CD8-positive, alpha-beta T cell (primary cell): ENCODE measurements at regions of chr10 and their contacts with region 1.

Region 1: DNA sequence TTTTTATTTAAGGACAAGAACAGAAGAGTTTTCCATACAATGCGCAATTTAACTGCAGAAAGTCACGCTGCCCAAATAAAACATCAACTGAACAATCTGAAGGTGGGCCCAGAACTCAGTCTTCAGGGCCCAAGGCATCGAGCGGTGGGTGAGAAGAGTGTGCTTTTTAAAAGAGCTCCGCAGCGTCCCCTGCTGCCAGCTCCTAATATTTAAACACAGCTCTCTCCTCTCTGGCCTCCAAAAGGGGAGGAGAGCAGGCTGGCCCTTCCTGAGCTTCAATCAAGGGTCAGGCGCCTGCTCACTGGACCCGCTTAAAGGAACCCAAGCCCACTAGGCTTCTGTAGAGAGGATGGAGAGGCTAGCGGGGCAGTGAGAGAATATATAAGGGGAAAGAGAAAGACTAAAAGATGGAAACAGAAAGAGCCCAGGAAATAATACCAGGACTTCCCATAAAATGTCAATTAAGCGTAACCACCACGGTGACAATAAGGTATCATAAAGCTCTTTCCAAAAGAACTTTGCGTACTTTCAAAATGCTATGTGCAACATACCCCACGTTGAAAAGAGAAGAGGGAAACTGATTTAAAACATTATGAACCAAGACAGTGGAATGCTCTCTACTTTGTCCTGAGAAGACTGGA is 2.8 kb downstream of the FAM53B start:
- DNase-seq: peak; percentile 64 to 88 (median 80)
- ATAC-seq: peak; percentile 55
- H3K4me3 ChIP-seq: peak overlapping the region; percentile 10 to 75
- H3K4me3 Mint-ChIP-seq: peak overlapping the region; percentile 97
- H3K27ac ChIP-seq: peak overlapping the region in 1 of 2 experiments; percentile 73
- H3K27ac Mint-ChIP-seq: peak overlapping the region; percentile 93
- H3K4me1 ChIP-seq: peaks cover 67% of the 10 kb centered on the region
- H3K4me1 Mint-ChIP-seq: peaks cover 75% of the 10 kb centered on the region
- H3K27me3 ChIP-seq: no peaks in the 10 kb centered on the region
- H3K27me3 Mint-ChIP-seq: no peaks in the 10 kb centered on the region
- CTCF ChIP-seq: peak; percentile 94

Region 2: GRCh38 chr10:123994417-123995081 is 746.9 kb before region 1 on chr10:
- CTCF ChIA-PET with region 1: interaction called, 6 read pairs
- POLR2A ChIA-PET with region 1: no interaction called
- intact Hi-C with region 1: loop called in 1 of 2 experiments (anchors 2 kb)
- DNase-seq: peak; percentile 56 to 91 (median 77)
- ATAC-seq: peak; percentile 90
- H3K4me3 ChIP-seq: peak overlapping the region; percentile 10 to 39
- H3K4me3 Mint-ChIP-seq: peak overlapping the region; percentile 29
- H3K27ac ChIP-seq: no peak overlapping the region
- H3K27ac Mint-ChIP-seq: no peak overlapping the region
- H3K4me1 ChIP-seq: peaks cover 10% of the 10 kb centered on the region
- H3K4me1 Mint-ChIP-seq: peaks cover 25% of the 10 kb centered on the region
- H3K27me3 ChIP-seq: peaks cover 12 to 18% of the 10 kb centered on the region in 2 experiments
- H3K27me3 Mint-ChIP-seq: peaks cover 48% of the 10 kb centered on the region
- CTCF ChIP-seq: peak; percentile 95

Region 3: DNA sequence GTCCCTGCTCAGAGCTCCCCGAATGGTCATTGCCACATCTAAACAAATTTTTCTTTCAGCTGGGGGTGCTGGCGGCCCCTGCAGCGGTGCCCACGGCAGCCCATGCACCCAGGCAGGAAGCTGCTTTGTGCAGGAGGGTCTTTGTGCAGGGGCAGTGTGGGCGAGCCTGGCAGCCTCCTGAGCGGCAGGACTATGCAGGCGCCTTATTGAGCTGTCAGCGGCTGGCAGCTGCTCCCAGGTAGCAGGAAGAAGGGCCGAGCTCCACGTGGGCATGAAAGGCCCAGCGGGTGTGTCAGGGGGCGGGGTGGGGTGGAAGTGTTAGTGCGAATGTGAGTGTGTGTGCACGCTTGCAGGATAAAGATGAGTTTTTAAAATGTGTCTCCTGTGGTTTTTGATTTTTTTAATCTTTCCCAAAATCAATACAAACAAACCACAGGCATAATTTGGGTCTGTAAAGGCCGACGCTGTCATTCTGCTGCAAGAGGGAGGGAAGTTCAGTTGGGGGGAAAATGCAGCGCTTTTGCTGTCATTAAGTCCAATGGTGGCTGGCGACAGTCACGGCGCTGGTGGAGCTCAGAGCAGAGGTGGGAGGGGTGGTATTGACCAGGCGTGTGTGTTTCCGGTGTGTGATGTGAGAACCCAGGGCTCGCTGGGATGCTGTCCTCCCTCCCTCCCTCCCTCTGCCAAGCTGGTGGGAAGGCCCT is 195.9 kb before region 1 on chr10:
- CTCF ChIA-PET with region 1: interaction called, 140 read pairs
- POLR2A ChIA-PET with region 1: interaction called, 10 read pairs
- intact Hi-C with region 1: loop called (anchors 1 kb)
- DNase-seq: peak in 2 of 9 experiments; percentile 21 to 55
- ATAC-seq: peak; percentile 46
- H3K4me3 ChIP-seq: no peak overlapping the region
- H3K4me3 Mint-ChIP-seq: peak overlapping the region; percentile 47
- H3K27ac ChIP-seq: no peak overlapping the region
- H3K27ac Mint-ChIP-seq: no peak overlapping the region
- H3K4me1 ChIP-seq: peaks cover 18% of the 10 kb centered on the region
- H3K4me1 Mint-ChIP-seq: peaks cover 20% of the 10 kb centered on the region
- H3K27me3 ChIP-seq: no peaks in the 10 kb centered on the region
- H3K27me3 Mint-ChIP-seq: no peaks in the 10 kb centered on the region
- CTCF ChIP-seq: no peak

Region 4: DNA sequence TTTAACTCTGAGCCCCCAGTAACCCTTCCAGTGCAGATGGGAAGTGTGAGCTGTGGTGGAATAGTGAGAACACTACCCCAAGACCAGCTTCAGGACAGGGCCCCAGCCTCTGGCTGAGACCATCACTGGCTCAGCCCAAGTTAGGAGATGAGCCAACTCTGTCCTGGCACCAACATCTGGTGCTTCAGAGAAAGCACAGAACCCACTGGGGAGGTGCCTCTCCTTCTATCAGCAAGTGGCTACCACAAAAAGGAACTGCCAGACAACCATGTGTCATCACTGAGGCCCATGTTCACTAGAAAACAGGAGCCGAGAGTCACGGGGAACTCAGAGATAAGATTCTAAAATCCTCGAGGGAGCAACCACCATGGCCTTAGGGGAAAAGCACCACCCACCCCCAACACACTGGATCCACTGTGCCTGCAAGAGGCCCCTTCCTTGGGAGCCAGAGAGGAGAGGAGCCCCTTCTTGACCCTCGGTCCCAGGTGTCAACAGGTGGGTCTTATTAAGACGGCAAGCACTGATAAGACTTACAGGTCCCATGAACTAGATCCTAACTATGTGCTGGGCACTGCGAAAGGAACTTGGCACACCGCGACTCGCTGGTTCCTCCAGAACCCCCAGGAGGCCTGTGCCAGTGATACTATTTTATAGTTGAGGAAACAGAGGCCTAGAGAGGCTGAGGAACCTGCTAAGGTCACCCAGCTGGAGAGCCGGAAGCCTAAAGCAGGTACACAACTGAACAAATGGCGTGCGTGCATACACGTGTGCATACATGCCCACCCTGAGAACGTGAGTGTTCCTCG is 99.9 kb before region 1 on chr10:
- CTCF ChIA-PET with region 1: interaction called, 74 read pairs
- POLR2A ChIA-PET with region 1: interaction called, 6 read pairs
- intact Hi-C with region 1: no loop called
- DNase-seq: peak in 7 of 9 experiments; percentile 41 to 85 (median 64)
- ATAC-seq: peak; percentile 71
- H3K4me3 ChIP-seq: peak overlapping the region in 1 of 2 experiments; percentile 13
- H3K4me3 Mint-ChIP-seq: peak overlapping the region; percentile 59
- H3K27ac ChIP-seq: peak overlapping the region; percentile 47 to 68
- H3K27ac Mint-ChIP-seq: peak overlapping the region; percentile 94
- H3K4me1 ChIP-seq: peaks cover 66% of the 10 kb centered on the region
- H3K4me1 Mint-ChIP-seq: peaks cover 71% of the 10 kb centered on the region
- H3K27me3 ChIP-seq: no peaks in the 10 kb centered on the region
- H3K27me3 Mint-ChIP-seq: no peaks in the 10 kb centered on the region
- CTCF ChIP-seq: no peak

Region 5: DNA sequence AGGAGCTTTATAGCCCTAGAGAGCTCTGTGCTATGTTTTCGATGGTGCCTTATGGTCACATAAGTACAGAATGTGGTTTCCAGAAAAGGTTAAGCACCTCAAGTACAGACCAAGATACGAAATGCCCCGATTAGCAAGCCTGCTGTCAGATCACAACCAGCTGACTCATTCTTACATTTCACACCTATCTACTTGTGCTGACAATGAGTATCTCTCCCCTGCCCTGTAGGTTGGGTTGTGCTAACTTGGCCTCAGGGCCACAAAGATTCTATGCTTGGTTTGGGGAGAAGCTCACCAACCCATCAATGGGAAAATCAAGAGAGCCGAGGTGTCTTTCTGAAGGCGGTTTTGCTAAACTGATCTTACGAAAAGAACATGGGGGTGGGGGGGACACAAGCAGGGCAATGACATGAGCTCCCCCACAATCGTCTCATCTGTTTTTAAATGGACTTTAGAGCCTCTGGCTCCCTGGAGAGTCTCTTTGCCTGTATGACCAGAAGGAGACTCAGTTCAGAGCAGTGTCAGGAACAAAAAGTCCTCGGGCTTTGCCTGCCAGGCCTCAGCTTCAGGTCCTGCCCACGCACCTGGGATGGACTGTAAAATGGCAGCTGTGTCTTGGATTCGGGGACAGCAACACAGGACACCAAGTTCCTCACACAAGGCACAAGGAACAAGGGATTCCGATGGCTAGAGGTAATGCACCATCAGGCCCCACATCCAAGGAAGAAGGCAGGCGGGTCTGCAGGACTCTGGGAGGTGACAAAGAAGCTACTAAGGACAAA is 52.3 kb before region 1 on chr10:
- CTCF ChIA-PET with region 1: interaction called, 24 read pairs
- POLR2A ChIA-PET with region 1: interaction called, 10 read pairs
- intact Hi-C with region 1: loop called in 1 of 2 experiments (anchors 5 kb)
- DNase-seq: peak in 8 of 9 experiments; percentile 19 to 91 (median 60)
- ATAC-seq: peak; percentile 84
- H3K4me3 ChIP-seq: no peak overlapping the region
- H3K4me3 Mint-ChIP-seq: peak overlapping the region; percentile 47
- H3K27ac ChIP-seq: peak overlapping the region; percentile 12 to 72
- H3K27ac Mint-ChIP-seq: peak overlapping the region; percentile 87
- H3K4me1 ChIP-seq: peaks cover 72% of the 10 kb centered on the region
- H3K4me1 Mint-ChIP-seq: peaks cover 81% of the 10 kb centered on the region
- H3K27me3 ChIP-seq: no peaks in the 10 kb centered on the region
- H3K27me3 Mint-ChIP-seq: no peaks in the 10 kb centered on the region
- CTCF ChIP-seq: no peak

Region 6: DNA sequence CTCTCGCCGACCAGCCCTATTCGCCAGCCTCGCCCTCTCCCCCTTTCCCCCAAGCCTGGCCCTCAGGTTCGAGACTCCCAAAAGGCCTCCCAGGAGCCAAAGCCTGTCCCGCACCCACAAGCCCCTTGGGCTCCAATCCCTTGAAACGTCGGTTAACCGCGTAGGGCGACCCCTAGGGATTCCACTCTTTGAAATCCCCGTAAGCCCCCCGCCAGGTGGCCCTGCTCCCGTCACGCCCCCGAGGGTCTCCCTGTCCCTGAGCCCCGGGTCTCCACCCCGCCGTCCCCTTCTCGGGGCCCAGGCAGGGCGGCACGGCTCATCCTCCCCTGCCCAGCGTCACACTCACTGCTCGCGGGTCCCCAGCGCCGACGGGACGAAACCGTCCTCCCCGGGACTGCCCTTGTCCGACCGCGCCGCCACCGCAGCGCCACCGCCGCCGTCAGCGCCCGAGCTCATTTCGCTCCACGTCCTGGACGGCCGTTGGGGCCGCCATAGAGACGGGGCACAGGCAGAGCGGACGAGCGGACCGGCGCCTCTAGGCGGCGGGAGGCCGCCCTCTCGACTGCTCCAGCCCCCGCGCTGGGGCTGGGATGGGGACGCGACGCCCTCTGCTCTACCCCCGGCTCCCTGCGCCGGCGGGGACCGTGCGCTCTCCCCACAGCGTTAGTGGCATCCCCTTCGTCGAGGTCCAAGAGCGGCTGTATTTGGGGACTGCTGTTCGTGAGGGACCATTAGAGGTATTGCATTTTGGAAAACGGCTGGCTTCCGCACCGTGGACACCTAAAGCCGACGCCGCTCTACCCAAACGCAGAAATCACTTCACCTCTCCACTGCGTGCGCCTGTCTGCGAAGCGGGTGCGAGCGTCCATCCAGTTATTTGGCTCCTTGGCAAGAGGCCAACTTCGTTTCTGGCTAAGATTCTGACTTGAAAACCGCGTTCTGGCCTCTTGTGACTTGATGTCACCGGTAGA is 50.3 kb after region 1 on chr10 and contains the start of gene EEF1AKMT2:
- CTCF ChIA-PET with region 1: no interaction called
- POLR2A ChIA-PET with region 1: no interaction called
- intact Hi-C with region 1: loop called in 1 of 2 experiments (anchors 2 kb)
- DNase-seq: peak; percentile 72 to 90 (median 80)
- ATAC-seq: peak; percentile 94
- H3K4me3 ChIP-seq: peak within 1 kb of the TSS; percentile 75 to 93
- H3K4me3 Mint-ChIP-seq: peak within 1 kb of the TSS; percentile 98
- H3K27ac ChIP-seq: peak within 1 kb of the TSS; percentile 62 to 86
- H3K27ac Mint-ChIP-seq: peak within 1 kb of the TSS; percentile 96
- H3K4me1 ChIP-seq: peaks cover 11% of the 10 kb centered on the region
- H3K4me1 Mint-ChIP-seq: peaks cover 24% of the 10 kb centered on the region
- H3K27me3 ChIP-seq: no peaks in the 10 kb centered on the region
- H3K27me3 Mint-ChIP-seq: no peaks in the 10 kb centered on the region
- CTCF ChIP-seq: no peak
- total RNA-seq, gene EEF1AKMT2: 13.8 to 13.9 TPM